Breast epithelium (tissue), 4 donors: ENCODE measurements at regions of chr13 and their contacts with region 1.

Region 1: DNA sequence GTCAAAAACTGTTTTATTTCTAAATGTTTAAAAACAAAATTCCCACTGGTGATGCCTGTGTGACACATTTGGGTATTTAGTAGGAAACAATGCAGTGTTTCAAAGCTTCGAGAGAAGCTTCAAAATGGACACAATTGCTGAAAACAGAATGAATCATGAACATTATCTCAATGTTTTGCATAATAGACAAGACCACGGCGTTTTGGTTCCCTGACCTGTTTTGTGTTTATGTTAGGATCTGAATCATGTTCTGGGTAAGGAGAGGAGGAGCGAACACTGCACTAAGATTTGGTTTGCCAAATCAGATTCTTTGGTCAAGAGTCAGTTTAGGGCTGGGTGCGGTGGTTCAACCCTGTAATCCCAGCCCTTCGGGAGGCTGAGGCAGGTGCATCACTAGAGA is 42.2 kb downstream of the IFT88 start:
- DNase-seq: no peak
- H3K4me3 ChIP-seq: no peak overlapping the region
- H3K27ac ChIP-seq: no peak overlapping the region
- H3K4me1 ChIP-seq: no peaks in the 10 kb centered on the region
- H3K27me3 ChIP-seq: no peaks in the 10 kb centered on the region
- CTCF ChIP-seq: no peak
- POLR2A ChIP-seq: no peak

Region 2: GRCh38 chr13:19810996-19811891 is 797.9 kb before region 1 on chr13:
- intact Hi-C with region 1: loop called (anchors 5 kb)
- DNase-seq: no peak
- H3K4me3 ChIP-seq: no peak overlapping the region
- H3K27ac ChIP-seq: no peak overlapping the region
- H3K4me1 ChIP-seq: no peaks in the 10 kb centered on the region
- H3K27me3 ChIP-seq: no peaks in the 10 kb centered on the region
- CTCF ChIP-seq: no peak
- POLR2A ChIP-seq: no peak

Region 3: GRCh38 chr13:20592606-20593005 is 16.5 kb before region 1 on chr13:
- intact Hi-C with region 1: no loop called
- DNase-seq: no peak
- H3K4me3 ChIP-seq: no peak overlapping the region
- H3K27ac ChIP-seq: no peak overlapping the region
- H3K4me1 ChIP-seq: no peaks in the 10 kb centered on the region
- H3K27me3 ChIP-seq: no peaks in the 10 kb centered on the region
- CTCF ChIP-seq: no peak
- POLR2A ChIP-seq: no peak

Region 4: DNA sequence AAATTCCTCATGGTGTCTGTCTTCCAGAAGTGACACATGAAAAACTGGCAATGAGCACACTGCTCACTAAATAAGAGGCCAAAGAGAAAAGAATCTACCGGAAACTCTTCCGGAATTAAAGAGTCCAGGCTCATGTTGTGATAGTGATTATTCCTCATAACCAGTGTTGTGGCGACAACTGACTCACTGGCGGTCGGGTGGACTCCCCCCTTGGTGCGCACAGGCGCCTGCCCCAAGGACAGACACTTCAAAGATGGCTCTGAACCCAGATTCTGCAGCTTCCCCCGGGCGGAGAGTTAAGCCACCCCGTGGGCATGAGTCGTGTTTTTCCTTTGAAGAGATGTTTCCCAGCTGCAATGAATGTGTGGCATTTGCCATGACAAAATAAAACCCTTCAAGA is 104.6 kb after region 1 on chr13:
- intact Hi-C with region 1: no loop called
- DNase-seq: no peak
- H3K4me3 ChIP-seq: no peak overlapping the region
- H3K27ac ChIP-seq: no peak overlapping the region
- H3K4me1 ChIP-seq: no peaks in the 10 kb centered on the region
- H3K27me3 ChIP-seq: no peaks in the 10 kb centered on the region
- CTCF ChIP-seq: no peak
- POLR2A ChIP-seq: no peak